CD8-positive, alpha-beta T cell (primary cell): ENCODE measurements at regions of chr1 and their contacts with region 1.

Region 1: DNA sequence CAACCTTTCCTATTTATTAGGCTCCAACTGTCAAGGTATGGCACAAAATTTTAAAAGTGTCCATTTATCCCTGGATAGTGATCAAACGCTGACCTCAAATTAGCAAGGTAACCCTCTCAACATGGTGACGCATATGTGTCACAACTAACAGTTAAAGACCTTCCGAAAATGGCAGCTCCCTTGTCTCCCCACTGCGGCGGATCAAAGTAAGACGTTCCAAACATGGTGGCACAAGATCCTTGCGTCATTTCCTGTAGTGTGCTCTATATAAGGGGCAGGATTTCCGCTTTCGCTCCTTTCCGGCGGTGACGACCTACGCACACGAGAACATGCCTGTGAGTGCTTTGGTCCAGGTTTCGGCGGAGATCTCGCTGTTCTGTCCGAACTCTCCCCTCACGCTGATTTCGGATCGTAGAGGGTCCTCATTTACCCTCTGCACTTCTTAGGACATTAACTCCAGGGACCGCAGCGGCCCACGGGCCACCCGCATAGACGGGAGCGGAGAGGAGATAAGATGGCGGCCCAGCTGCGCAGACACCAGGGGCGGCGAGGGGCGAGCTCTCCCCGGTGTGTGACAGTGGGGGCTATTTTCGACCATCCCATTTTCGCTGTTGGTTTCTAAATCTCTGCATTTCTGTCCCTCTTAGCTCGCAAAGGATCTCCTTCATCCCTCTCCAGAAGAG is at the start of gene RPS27:
- DNase-seq: peak; percentile 72 to 98 (median 85)
- ATAC-seq: peak; percentile 85
- H3K4me3 ChIP-seq: peak within 1 kb of the TSS; percentile 95 to 97
- H3K4me3 Mint-ChIP-seq: peak within 1 kb of the TSS; percentile 98
- H3K27ac ChIP-seq: peak within 1 kb of the TSS; percentile 98 to 99
- H3K27ac Mint-ChIP-seq: peak within 1 kb of the TSS; percentile 99
- H3K4me1 ChIP-seq: peaks cover 43% of the 10 kb centered on the region
- H3K4me1 Mint-ChIP-seq: peaks cover 44% of the 10 kb centered on the region
- H3K27me3 ChIP-seq: no peaks in the 10 kb centered on the region
- H3K27me3 Mint-ChIP-seq: no peaks in the 10 kb centered on the region
- CTCF ChIP-seq: no peak
- total RNA-seq, gene RPS27: 6,306 to 6,659 TPM

Region 2: GRCh38 chr1:153532769-153533599 is 457.6 kb before region 1 on chr1:
- CTCF ChIA-PET with region 1: interaction called, 3 read pairs
- POLR2A ChIA-PET with region 1: interaction called, 6 read pairs
- intact Hi-C with region 1: loop called in 1 of 2 experiments (anchors 10 kb)
- DNase-seq: peak; percentile 55 to 86 (median 78)
- ATAC-seq: peak; percentile 13
- H3K4me3 ChIP-seq: peak overlapping the region in 1 of 2 experiments; percentile 33
- H3K4me3 Mint-ChIP-seq: peak overlapping the region; percentile 89
- H3K27ac ChIP-seq: peak overlapping the region; percentile 18 to 92
- H3K27ac Mint-ChIP-seq: peak overlapping the region; percentile 94
- H3K4me1 ChIP-seq: peaks cover 56% of the 10 kb centered on the region
- H3K4me1 Mint-ChIP-seq: peaks cover 67% of the 10 kb centered on the region
- H3K27me3 ChIP-seq: no peaks in the 10 kb centered on the region
- H3K27me3 Mint-ChIP-seq: no peaks in the 10 kb centered on the region
- CTCF ChIP-seq: peak; percentile 79

Region 3: DNA sequence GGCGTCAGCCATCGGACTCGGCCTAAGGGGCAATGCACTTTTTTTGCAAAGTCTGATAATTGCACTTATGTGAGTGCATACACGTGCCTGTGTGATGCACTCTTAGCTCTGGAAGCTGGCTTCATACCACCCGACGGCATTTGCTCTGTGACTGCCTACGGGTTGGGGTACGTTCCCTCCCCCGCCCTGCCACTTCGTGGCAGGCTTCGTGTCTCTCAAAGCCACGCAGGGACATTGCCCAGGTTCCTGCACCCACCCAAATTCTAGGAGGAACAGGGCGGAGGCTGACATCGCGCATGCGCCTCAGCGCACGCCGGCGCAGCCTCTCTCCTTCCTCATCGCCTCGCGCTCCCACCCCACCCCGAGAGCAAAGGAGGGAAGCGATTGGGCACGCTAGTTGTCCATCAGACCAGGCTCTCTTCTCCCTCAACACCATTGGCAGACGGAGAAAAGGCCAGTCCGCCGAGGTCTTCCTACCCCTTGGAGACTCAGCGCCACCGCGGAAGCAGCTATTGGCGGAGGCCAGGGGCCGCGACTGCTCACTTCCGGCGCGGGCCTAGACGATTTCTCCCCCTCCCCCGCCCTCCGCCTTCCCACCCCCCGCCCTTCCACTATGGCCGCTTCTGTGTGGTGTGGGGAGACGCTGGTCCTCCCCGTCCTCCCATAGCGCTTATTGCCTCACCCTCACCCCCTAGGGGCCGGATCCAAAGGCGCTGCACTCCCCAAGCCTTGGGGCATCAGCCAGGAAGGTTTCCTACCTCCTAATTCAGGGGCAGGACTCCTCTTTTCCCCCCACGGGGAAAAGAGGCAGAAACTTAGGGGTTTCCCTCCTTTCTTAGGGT is 262.9 kb before region 1 on chr1 and contains the start of gene INTS3:
- CTCF ChIA-PET with region 1: no interaction called
- POLR2A ChIA-PET with region 1: interaction called, 4 read pairs
- intact Hi-C with region 1: loop called (anchors 1 to 2 kb)
- DNase-seq: peak; percentile 97 to 100 (median 99)
- ATAC-seq: peak; percentile 98
- H3K4me3 ChIP-seq: peak within 1 kb of the TSS; percentile 86 to 93
- H3K4me3 Mint-ChIP-seq: peak within 1 kb of the TSS; percentile 93
- H3K27ac ChIP-seq: peak within 1 kb of the TSS; percentile 91 to 96
- H3K27ac Mint-ChIP-seq: peak within 1 kb of the TSS; percentile 99
- H3K4me1 ChIP-seq: peaks cover 21% of the 10 kb centered on the region
- H3K4me1 Mint-ChIP-seq: peaks cover 34% of the 10 kb centered on the region
- H3K27me3 ChIP-seq: no peaks in the 10 kb centered on the region
- H3K27me3 Mint-ChIP-seq: no peaks in the 10 kb centered on the region
- CTCF ChIP-seq: no peak
- total RNA-seq, gene INTS3: 21.6 to 23.5 TPM

Region 4: GRCh38 chr1:153805042-153805745 is 185.4 kb before region 1 on chr1:
- CTCF ChIA-PET with region 1: interaction called, 73 read pairs
- POLR2A ChIA-PET with region 1: interaction called, 12 read pairs
- intact Hi-C with region 1: no loop called
- DNase-seq: peak; percentile 37 to 96 (median 72)
- ATAC-seq: peak; percentile 97
- H3K4me3 ChIP-seq: no peak overlapping the region
- H3K4me3 Mint-ChIP-seq: peak overlapping the region; percentile 30
- H3K27ac ChIP-seq: peak overlapping the region; percentile 56 to 76
- H3K27ac Mint-ChIP-seq: peak overlapping the region; percentile 87
- H3K4me1 ChIP-seq: peaks cover 29% of the 10 kb centered on the region
- H3K4me1 Mint-ChIP-seq: peaks cover 30% of the 10 kb centered on the region
- H3K27me3 ChIP-seq: no peaks in the 10 kb centered on the region
- H3K27me3 Mint-ChIP-seq: no peaks in the 10 kb centered on the region
- CTCF ChIP-seq: no peak

Region 5: DNA sequence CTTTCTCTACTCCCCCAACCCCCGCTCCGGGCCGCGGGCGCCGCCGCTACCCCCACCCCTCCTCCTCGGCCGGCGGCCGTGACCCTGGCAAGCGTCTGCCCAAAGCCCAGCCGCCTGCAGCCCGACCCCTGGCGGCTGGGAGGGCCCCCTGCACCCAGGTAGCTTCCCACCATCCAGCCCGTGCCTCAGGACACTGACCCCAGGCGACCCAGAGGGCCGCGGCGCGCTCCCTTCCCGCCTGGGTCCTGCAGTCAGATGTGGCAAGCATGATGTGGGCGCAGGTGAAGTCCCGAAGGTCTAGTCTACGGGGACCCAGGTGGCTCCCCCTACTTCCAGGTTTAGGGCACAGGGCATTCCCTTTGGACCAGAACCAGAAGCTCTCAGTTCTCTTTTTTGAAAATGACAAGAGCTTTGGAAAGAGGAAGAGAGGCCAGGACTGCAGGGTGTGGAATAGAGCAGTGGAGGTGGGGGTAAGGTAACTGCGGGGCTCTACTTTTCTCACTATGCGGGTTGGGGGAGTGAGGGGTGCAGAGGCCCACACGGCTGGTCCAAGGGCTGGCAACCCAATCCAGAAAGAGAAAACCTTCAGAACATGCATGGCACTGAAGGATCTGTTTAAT is 43.9 kb before region 1 on chr1 and contains the start of gene DENND4B:
- CTCF ChIA-PET with region 1: interaction called, 15 read pairs
- POLR2A ChIA-PET with region 1: interaction called, 37 read pairs
- intact Hi-C with region 1: loop called (anchors 1 kb)
- DNase-seq: peak; percentile 43 to 87 (median 75)
- ATAC-seq: peak; percentile 61
- H3K4me3 ChIP-seq: peak within 1 kb of the TSS; percentile 71 to 84
- H3K4me3 Mint-ChIP-seq: peak within 1 kb of the TSS; percentile 94
- H3K27ac ChIP-seq: peak within 1 kb of the TSS; percentile 81 to 95
- H3K27ac Mint-ChIP-seq: peak within 1 kb of the TSS; percentile 86
- H3K4me1 ChIP-seq: peaks cover 33% of the 10 kb centered on the region
- H3K4me1 Mint-ChIP-seq: peaks cover 25% of the 10 kb centered on the region
- H3K27me3 ChIP-seq: no peaks in the 10 kb centered on the region
- H3K27me3 Mint-ChIP-seq: no peaks in the 10 kb centered on the region
- CTCF ChIP-seq: peak; percentile 95
- total RNA-seq, gene DENND4B: 87.2 to 91.3 TPM

Region 6: GRCh38 chr1:154157520-154158306 is 167.1 kb after region 1 on chr1:
- CTCF ChIA-PET with region 1: no interaction called
- POLR2A ChIA-PET with region 1: interaction called, 27 read pairs
- intact Hi-C with region 1: loop called in 1 of 2 experiments (anchors 1 kb)
- DNase-seq: peak; percentile 41 to 93 (median 71)
- ATAC-seq: peak; percentile 98
- H3K4me3 ChIP-seq: peak overlapping the region in 1 of 2 experiments; percentile 16
- H3K4me3 Mint-ChIP-seq: peak overlapping the region; percentile 61
- H3K27ac ChIP-seq: peak overlapping the region; percentile 51 to 61
- H3K27ac Mint-ChIP-seq: peak overlapping the region; percentile 95
- H3K4me1 ChIP-seq: peaks cover 72% of the 10 kb centered on the region
- H3K4me1 Mint-ChIP-seq: peaks cover 78% of the 10 kb centered on the region
- H3K27me3 ChIP-seq: no peaks in the 10 kb centered on the region
- H3K27me3 Mint-ChIP-seq: no peaks in the 10 kb centered on the region
- CTCF ChIP-seq: no peak

Region 7: GRCh38 chr1:154335025-154335714 is 344.6 kb after region 1 on chr1:
- CTCF ChIA-PET with region 1: no interaction called
- POLR2A ChIA-PET with region 1: interaction called, 4 read pairs
- intact Hi-C with region 1: loop called in 1 of 2 experiments (anchors 10 kb)
- DNase-seq: peak; percentile 78 to 95 (median 93)
- ATAC-seq: peak; percentile 94
- H3K4me3 ChIP-seq: no peak overlapping the region
- H3K4me3 Mint-ChIP-seq: peak overlapping the region; percentile 48
- H3K27ac ChIP-seq: peak overlapping the region; percentile 22 to 75
- H3K27ac Mint-ChIP-seq: peak overlapping the region; percentile 95
- H3K4me1 ChIP-seq: peaks cover 78% of the 10 kb centered on the region
- H3K4me1 Mint-ChIP-seq: peaks cover 75% of the 10 kb centered on the region
- H3K27me3 ChIP-seq: no peaks in the 10 kb centered on the region
- H3K27me3 Mint-ChIP-seq: no peaks in the 10 kb centered on the region
- CTCF ChIP-seq: peak; percentile 88